Activated naive CD4-positive, alpha-beta T cell treated with anti-CD3 and anti-CD28 coated beads for 36 hours (primary cell): ENCODE measurements at regions of chr20 and their contacts with region 1.

Region 1: GRCh38 chr20:62793912-62794724 is 2.2 kb upstream of the MRGBP start:
- DNase-seq: peak; percentile 97
- H3K4me3 Mint-ChIP-seq: peak overlapping the region; percentile 81
- H3K27ac Mint-ChIP-seq: peak overlapping the region; percentile 84
- H3K4me1 Mint-ChIP-seq: peaks cover 25% of the 10 kb centered on the region
- H3K27me3 Mint-ChIP-seq: no peaks in the 10 kb centered on the region

Region 2: DNA sequence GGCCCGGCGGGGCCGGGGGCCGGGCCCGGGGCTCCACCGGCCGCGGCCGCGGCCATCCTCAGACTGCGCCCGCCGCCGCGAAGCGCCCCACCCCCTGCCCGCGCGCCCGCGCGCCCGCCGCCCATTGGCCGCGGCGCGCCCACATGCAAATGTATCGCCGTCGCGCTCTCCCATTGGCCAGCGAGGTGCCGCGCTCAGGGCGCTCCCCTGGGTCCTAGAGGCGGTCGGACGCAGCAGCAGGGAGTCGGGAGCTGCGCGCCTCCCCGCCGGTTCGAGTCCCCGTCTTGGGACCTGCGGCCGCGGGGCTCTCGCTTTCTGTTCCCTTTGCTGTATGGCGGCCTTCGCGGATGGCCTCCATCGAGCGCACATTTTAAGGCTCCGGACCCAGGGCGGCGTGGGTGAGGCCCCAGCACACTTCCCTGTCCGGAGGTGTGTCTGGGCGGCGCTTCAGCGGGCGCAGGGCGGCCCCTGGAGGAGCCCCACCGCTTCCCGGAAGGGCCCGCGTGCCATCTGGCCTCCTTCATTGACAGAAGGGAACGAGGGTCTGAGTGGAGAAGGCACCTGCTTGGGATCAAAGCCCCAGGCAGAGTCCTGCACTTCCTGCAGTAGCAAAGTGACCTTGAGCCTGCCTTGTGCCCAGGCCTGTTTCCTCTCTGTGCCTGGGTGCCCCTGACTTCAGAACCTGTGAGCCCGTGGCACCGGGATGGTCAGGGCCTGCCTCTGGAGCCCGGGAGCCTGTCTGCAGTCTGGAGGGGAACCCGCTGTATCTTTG is 386.7 kb before region 1 on chr20 and contains the start of gene CABLES2:
- CTCF ChIA-PET with region 1: interaction called, 6 read pairs
- intact Hi-C with region 1: loop called (anchors 2 kb)
- DNase-seq: peak; percentile 94
- H3K4me3 Mint-ChIP-seq: peak within 1 kb of the TSS; percentile 78
- H3K27ac Mint-ChIP-seq: peak within 1 kb of the TSS; percentile 80
- H3K4me1 Mint-ChIP-seq: peaks cover 31% of the 10 kb centered on the region
- H3K27me3 Mint-ChIP-seq: no peaks in the 10 kb centered on the region
- total RNA-seq, gene CABLES2: 3.6 to 5.1 TPM

Region 3: DNA sequence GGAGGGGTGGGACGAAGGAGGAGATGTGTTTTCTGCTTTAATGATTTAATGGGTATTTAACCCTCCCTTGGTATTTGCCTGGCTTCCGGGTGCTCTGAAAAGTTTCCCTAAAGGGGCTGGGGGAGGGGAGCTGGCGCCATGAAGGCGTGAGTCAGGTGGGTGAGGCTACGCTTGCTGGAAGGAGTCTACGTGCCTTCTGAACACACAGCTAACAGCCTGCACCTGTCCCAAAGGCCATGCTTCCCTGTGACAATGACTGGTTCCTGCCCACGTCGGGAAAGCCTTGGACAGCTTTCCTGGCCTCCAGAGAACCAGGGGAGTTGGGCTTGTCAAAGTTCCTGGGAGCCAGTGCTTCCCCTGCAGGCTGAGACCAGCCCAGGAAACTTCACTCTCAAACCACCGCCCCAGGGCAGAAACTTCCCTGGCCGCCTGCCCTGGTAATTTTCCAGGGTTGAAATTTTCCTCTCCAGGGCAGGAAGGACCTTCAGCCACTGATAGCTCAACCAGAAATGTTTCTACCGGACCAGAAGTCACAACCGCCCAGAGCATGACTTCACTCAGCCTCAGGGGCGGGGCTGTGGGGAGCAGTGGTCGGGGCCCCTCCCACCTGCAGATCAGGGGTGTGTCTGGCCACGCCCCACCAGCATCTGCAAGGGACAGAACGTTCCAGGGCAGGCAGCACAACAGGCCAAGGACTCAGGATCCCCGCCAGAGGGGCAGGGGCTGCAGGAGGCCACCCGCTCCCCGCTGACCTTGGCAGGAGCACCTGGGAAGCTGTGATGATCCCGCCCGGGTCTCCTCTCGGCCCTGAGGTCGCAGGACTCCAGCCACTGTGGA is 170.4 kb before region 1 on chr20:
- CTCF ChIA-PET with region 1: interaction called, 8 read pairs
- intact Hi-C with region 1: loop called (anchors 1 kb)
- DNase-seq: peak; percentile 95
- H3K4me3 Mint-ChIP-seq: peak overlapping the region; percentile 74
- H3K27ac Mint-ChIP-seq: peak overlapping the region; percentile 94
- H3K4me1 Mint-ChIP-seq: peaks cover 23% of the 10 kb centered on the region
- H3K27me3 Mint-ChIP-seq: no peaks in the 10 kb centered on the region

Region 4: GRCh38 chr20:62704301-62704948 is 89.7 kb before region 1 on chr20:
- CTCF ChIA-PET with region 1: interaction called, 12 read pairs
- intact Hi-C with region 1: loop called (anchors 1 kb)
- DNase-seq: no peak
- H3K4me3 Mint-ChIP-seq: no peak overlapping the region
- H3K27ac Mint-ChIP-seq: no peak overlapping the region
- H3K4me1 Mint-ChIP-seq: peaks cover 6% of the 10 kb centered on the region
- H3K27me3 Mint-ChIP-seq: peaks cover 11% of the 10 kb centered on the region

Region 5: GRCh38 chr20:62776692-62777527 is 17.2 kb before region 1 on chr20:
- CTCF ChIA-PET with region 1: interaction called, 6 read pairs
- intact Hi-C with region 1: loop called (anchors 1 kb)
- DNase-seq: peak; percentile 89
- H3K4me3 Mint-ChIP-seq: peak overlapping the region; percentile 67
- H3K27ac Mint-ChIP-seq: peak overlapping the region; percentile 92
- H3K4me1 Mint-ChIP-seq: peaks cover 53% of the 10 kb centered on the region
- H3K27me3 Mint-ChIP-seq: no peaks in the 10 kb centered on the region